Heart right ventricle (tissue), 16 donors: ENCODE measurements at regions of chr10 and their contacts with region 1.

Region 1: DNA sequence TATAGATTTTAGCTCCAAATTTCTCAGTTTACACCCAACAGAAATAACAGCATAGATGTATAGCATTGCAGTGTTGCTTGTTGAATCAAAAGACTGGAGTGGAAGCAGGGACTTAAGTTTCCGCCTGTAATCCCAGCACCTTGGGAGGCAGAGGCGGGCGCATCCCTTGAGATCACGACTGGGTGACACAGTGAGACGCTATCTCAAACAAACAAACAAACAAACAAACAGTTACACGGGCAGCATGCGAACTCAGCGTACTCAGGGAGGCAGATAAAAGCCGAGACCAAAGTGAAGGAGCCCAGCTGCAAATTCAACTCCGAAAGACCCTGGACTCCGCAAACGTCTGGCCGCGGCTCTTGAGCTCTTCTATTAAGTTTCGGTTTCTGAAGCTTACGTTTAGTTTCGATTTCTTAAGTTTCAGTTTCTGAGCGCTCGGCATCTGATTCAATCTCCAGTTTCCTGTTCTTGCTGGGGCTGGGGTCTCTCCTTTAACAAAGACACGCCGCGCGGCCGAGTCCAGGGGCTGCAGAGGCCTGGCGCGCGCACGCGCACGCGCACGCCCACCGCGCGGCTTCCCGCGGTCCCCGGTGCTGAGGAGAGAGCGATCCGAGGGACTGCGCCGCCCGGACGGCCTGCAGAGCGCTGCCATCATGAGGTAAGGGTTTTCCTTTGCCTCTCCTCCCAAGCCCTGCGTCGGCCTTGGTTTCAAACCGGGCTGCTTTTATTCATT is at the start of gene IFIT5:
- DNase-seq: peak; percentile 71 to 80
- ATAC-seq: peak; percentile 92 to 98 (median 94)
- H3K4me3 ChIP-seq: peak within 1 kb of the TSS; percentile 63 to 97 (median 89)
- H3K27ac ChIP-seq: peak within 1 kb of the TSS; percentile 87 to 99 (median 97)
- H3K4me1 ChIP-seq: peaks cover 0 to 68% (median 41%) of the 10 kb centered on the region in 9 donors
- H3K27me3 ChIP-seq: no peaks in the 10 kb centered on the region
- CTCF ChIP-seq: peak in 2 of 9 donors; percentile 9 to 18
- total RNA-seq, gene IFIT5: 8.3 to 16.9 (median 11.2) TPM

Region 2: DNA sequence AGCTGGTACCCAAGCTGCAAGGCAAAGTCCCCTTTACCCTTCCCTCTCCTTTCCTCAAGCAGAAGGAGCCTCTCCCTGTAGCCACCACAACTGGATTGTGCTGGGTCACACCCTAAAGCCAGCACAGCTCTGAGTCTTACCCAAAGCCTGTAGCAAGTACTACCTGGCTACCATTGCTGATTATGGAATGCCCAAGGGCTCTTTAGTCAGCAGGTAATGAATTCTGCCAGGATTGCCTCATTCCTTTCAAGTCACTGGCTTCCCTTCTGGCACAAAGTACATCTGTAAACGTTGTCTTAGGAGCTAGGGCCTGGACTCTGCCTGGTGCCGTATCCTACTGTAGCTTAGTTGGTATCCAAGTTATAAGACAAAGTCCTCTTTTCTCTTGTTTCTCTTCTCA is 371.8 kb before region 1 on chr10:
- intact Hi-C with region 1: loop called in 1 of 10 experiments (anchors 5 kb)
- DNase-seq: no peak
- ATAC-seq: no peak
- H3K4me3 ChIP-seq: no peak overlapping the region
- H3K27ac ChIP-seq: no peak overlapping the region
- H3K4me1 ChIP-seq: peaks cover 0 to 7% (median 0%) of the 10 kb centered on the region in 9 donors
- H3K27me3 ChIP-seq: no peaks in the 10 kb centered on the region
- CTCF ChIP-seq: no peak

Region 3: GRCh38 chr10:89327784-89328441 is 86.4 kb before region 1 on chr10 and contains the start of gene IFIT3:
- intact Hi-C with region 1: loop called in 1 of 10 experiments (anchors 5 kb)
- DNase-seq: peak; percentile 32 to 84
- ATAC-seq: peak; percentile 91 to 96 (median 94)
- H3K4me3 ChIP-seq: peak within 1 kb of the TSS; percentile 4 to 60 (median 50)
- H3K27ac ChIP-seq: peak within 1 kb of the TSS; percentile 71 to 96 (median 90)
- H3K4me1 ChIP-seq: peaks cover 4 to 72% (median 50%) of the 10 kb centered on the region in 9 donors
- H3K27me3 ChIP-seq: no peaks in the 10 kb centered on the region
- CTCF ChIP-seq: peak in 1 of 9 donors; percentile 10
- total RNA-seq, gene IFIT3: 8.0 to 102 (median 13.2) TPM

Region 4: DNA sequence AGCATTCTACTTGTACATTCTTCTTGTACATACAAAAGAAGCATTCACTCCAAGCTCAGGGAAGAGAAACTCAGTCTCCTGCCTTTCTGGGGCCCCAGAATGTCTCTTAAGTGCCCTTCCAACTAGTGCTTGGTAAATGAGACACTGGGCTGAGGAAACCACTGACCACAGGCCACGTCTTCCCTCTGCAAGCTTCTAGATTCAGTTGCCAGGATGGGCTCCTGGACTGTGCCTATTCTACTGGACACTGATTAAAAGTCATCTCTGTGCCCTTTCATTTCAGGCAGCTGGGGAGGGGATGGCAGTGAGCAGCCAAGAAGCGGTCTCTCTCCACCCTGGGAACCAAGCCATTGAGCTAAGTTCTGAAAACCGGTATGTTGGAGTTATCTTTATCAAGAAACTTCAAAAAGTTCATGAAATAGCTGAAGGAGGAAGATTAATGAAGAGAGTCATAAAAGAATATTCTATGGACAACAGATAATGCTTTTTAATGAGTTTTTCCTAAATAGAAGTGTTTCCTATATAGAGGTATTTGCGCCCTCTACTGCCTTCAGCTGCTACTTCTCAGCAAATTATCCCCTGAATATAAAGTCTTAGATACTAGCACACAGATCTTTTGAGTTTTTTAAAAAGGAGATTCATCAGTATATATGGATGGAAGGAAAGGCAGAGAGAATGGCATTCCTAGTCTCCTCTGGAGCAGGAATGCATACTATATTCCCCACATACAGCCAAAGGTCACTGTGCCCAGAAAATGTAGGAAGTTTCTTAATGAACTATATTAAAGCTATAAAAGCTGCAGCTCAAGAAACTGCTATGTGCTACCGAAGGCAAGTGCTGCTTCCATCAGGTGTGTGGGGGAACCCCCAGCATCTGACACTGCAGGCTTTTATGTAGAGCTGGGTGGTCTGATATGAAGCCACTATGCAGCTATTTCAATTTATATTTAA is 44.9 kb before region 1 on chr10:
- intact Hi-C with region 1: loop called in 1 of 10 experiments (anchors 2 kb)
- DNase-seq: no peak
- ATAC-seq: peak in 4 of 8 donors; percentile 11 to 36 (median 28)
- H3K4me3 ChIP-seq: no peak overlapping the region
- H3K27ac ChIP-seq: peak overlapping the region in 4 of 10 donors; percentile 29 to 57 (median 42)
- H3K4me1 ChIP-seq: peaks cover 10 to 43% (median 26%) of the 10 kb centered on the region in 9 donors
- H3K27me3 ChIP-seq: no peaks in the 10 kb centered on the region
- CTCF ChIP-seq: peak in 8 of 9 donors; percentile 36 to 68 (median 60)

Region 5: GRCh38 chr10:89391917-89392756 is 22.2 kb before region 1 on chr10 and contains the start of gene IFIT1:
- intact Hi-C with region 1: loop called in 1 of 10 experiments (anchors 2 kb)
- DNase-seq: peak in 1 of 2 donors; percentile 86
- ATAC-seq: peak; percentile 92 to 97 (median 96)
- H3K4me3 ChIP-seq: peak within 1 kb of the TSS; percentile 19 to 78 (median 62)
- H3K27ac ChIP-seq: peak within 1 kb of the TSS; percentile 55 to 97 (median 88)
- H3K4me1 ChIP-seq: peaks cover 0 to 61% (median 42%) of the 10 kb centered on the region in 9 donors
- H3K27me3 ChIP-seq: no peaks in the 10 kb centered on the region
- CTCF ChIP-seq: no peak
- total RNA-seq, gene IFIT1: 18.8 to 50.1 (median 30.1) TPM